ENCODE measurements at regions of chr17 and their contacts with region 1.

Region 1: GRCh38 chr17:20992987-20993862 is 49.6 kb downstream of the USP22 start:
- DNase-seq: peak; percentile 73

Region 2: GRCh38 chr17:20735796-20736195 is 257.4 kb before region 1 on chr17:
- intact Hi-C with region 1: no loop called
- DNase-seq: no peak

Region 3: DNA sequence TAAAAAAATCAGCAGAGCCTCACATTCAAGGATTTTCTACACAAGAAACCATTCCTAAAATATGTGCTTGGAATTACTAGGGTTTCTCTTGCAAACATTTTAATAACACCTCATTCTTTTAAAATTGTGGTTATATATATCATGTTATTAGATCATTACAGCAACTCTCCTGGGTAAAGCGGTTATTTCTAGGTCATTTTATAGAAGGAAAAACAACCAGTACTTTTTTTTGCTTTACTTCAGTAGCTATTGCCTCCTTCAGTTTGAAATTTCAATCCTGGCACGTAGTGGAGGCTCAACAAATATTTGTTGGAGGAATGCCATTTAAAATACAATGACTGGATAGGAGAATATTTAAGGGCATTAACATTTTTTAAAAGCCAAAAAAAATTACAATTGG is 193.1 kb before region 1 on chr17:
- intact Hi-C with region 1: loop called (anchors 10 kb)
- DNase-seq: no peak

Region 4: GRCh38 chr17:20908373-20909273 is 84.6 kb before region 1 on chr17:
- intact Hi-C with region 1: loop called (anchors 5 kb)
- DNase-seq: peak; percentile 95

Measured in cardiac septum (tissue), 1 donor.